ENCODE measurements at regions of chr2 and their contacts with region 1.

Region 1: GRCh38 chr2:239506101-239506857 is 105.5 kb upstream of the HDAC4 start:
- DNase-seq: no peak
- CTCF ChIP-seq: no peak

Region 2: DNA sequence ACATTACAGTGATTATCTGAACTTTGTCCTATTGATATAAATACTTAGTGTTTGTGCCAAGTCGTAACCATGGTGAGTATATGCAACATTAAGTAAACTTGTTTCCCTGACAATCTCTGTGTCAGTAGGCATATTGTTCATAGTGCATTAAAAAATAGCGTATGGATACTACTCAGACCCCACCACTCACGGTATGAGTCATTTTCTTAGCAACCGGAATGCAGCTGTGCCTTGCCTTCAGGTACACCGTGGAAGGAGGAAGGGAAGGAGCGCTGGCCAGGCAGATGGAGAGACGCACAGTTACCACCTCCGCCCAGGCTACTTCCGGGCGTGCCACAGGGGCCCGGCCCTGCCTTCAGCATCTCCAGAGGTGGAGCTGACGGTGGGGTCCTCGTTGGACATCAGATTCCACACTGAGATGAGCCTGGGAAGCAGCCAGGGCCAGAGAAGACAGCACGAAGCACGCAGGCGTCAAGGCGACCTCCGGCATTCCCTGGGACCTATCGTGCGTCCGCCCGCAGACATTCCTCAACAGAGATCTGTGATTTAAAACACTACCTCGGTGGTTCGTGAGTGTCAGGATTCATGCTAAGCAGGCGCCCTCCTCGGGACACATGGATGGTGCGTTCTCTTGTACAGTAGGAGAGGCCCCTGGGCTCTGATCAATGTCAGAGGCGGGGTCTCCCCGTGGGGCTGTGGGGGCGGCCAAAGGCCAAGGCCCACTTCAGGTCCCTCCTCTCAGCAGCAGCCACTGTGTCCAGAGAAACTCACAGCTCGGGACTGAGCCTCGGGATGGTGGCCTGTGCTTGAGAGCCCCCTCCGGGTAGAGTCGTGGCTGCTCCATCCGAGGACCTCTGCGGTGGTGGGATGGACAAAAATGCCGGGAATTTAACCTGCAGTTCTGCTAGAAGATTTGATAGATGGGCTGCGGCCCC is 23.2 kb before region 1 on chr2:
- CTCF ChIA-PET with region 1: no interaction called
- POLR2A ChIA-PET with region 1: no interaction called
- DNase-seq: no peak
- CTCF ChIP-seq: no peak

Region 3: DNA sequence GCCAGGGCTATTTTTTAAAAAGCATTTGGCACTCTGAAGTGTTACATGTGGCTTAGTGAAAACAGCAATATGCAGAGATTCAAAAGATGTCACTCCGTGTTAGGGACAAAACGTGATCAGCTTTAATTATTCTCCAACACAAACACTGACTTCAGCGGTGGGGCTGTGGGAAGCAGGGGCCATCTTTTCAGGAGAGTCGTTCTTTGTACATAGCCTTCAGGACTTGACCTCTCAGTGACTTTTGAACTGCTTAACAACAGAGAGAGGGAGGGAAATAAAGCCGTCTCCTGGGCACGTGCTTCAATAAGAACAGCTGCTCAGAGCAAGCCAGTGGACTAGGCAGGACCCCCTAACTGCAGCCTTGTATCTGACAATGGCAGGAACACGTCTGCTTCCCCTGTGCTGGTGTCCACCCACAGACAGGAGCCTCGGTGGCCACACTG is 10.5 kb before region 1 on chr2:
- CTCF ChIA-PET with region 1: no interaction called
- POLR2A ChIA-PET with region 1: no interaction called
- DNase-seq: no peak
- CTCF ChIP-seq: no peak

Region 4: DNA sequence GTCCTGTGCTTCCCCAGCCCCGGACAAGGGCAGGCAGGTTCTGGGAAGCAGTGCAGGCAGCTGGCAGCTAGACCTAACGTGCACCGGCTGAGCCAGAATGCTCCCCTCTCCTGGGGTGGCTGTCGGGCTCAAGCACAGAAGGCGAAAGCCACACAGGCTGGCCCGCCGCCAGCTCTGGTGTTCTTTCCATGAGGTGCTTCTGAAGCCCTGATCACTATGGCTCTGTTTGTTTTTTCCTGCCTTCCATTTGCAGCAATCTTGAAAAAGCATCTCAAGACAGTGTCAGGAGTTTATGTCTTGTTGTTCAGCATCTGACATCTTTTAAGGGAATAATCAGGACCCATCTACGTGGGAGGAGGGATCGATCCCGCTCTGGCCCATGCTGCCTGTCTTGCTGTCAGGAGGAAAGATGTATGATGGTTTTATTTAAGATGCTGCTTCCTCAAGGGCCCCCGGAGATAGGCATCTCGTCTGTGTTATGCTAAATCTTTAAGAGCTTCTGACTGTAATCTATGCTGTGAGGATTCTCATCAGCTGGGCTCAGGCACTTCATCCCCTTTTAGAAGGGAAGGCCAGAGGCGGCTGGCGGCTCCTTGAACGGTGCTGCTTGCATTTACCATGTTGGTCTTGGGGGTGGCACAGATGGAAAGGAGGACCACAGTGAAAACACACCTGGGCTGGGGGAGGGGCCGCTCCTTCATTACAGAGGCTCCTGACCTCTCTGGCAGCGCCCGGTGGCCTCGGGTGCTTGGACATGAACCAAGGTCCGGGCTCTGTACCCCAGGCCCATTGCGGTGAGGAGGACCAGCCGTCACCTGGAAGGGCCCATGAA is 13.0 kb after region 1 on chr2:
- CTCF ChIA-PET with region 1: interaction called, 12 read pairs
- POLR2A ChIA-PET with region 1: no interaction called
- DNase-seq: no peak
- CTCF ChIP-seq: no peak

Region 5: GRCh38 chr2:239545741-239546392 is 39.6 kb after region 1 on chr2:
- CTCF ChIA-PET with region 1: no interaction called
- POLR2A ChIA-PET with region 1: no interaction called
- DNase-seq: no peak
- CTCF ChIP-seq: no peak